ENCODE measurements at regions of chr5 and their contacts with region 1.

Region 1: GRCh38 chr5:151499501-151500035 is 52.2 kb downstream of the SLC36A1 start:
- DNase-seq: no peak
- H3K4me3 ChIP-seq: no peak overlapping the region
- H3K27ac ChIP-seq: no peak overlapping the region
- H3K4me1 ChIP-seq: peaks cover 0 to 4% (median under 1%) of the 10 kb centered on the region in 4 experiments; a peak in 3 of 7 replicates
- H3K27me3 ChIP-seq: no peaks in the 10 kb centered on the region
- CTCF ChIP-seq: no peak
- EP300 ChIP-seq: no peak
- POLR2A ChIP-seq: no peak
- RAD21 ChIP-seq: no peak

Region 2: GRCh38 chr5:151384106-151384505 is 115.5 kb before region 1 on chr5:
- CTCF ChIA-PET with region 1: interaction called, 14 read pairs
- POLR2A ChIA-PET with region 1: no interaction called
- DNase-seq: no peak
- H3K4me3 ChIP-seq: no peak overlapping the region
- H3K27ac ChIP-seq: no peak overlapping the region
- H3K4me1 ChIP-seq: peaks cover 5 to 22% (median 18%) of the 10 kb centered on the region in 4 experiments
- H3K27me3 ChIP-seq: no peaks in the 10 kb centered on the region
- CTCF ChIP-seq: no peak
- EP300 ChIP-seq: no peak
- POLR2A ChIP-seq: no peak
- RAD21 ChIP-seq: no peak

Region 3: GRCh38 chr5:151454166-151454565 is 45.4 kb before region 1 on chr5:
- CTCF ChIA-PET with region 1: interaction called, 66 read pairs
- POLR2A ChIA-PET with region 1: no interaction called
- DNase-seq: no peak
- H3K4me3 ChIP-seq: no peak overlapping the region
- H3K27ac ChIP-seq: no peak overlapping the region
- H3K4me1 ChIP-seq: peaks cover 0 to 4% (median 3%) of the 10 kb centered on the region in 4 experiments; a peak in 2 of 7 replicates
- H3K27me3 ChIP-seq: no peaks in the 10 kb centered on the region
- CTCF ChIP-seq: no peak
- EP300 ChIP-seq: no peak
- POLR2A ChIP-seq: no peak
- RAD21 ChIP-seq: no peak